WTC11 (cell line): ENCODE measurements at regions of chr9 and their contacts with region 1.

Region 1: GRCh38 chr9:33374634-33375213 is 27.6 kb downstream of the AQP7 start:
- DNase-seq: peak; percentile 81
- ATAC-seq: peak; percentile 87
- H3K4me3 Mint-ChIP-seq: peak overlapping the region; percentile 52
- H3K27ac Mint-ChIP-seq: peak overlapping the region; percentile 65
- H3K4me1 Mint-ChIP-seq: peaks cover 31% of the 10 kb centered on the region
- H3K27me3 Mint-ChIP-seq: no peaks in the 10 kb centered on the region
- CTCF ChIP-seq: peak; percentile 71

Region 2: DNA sequence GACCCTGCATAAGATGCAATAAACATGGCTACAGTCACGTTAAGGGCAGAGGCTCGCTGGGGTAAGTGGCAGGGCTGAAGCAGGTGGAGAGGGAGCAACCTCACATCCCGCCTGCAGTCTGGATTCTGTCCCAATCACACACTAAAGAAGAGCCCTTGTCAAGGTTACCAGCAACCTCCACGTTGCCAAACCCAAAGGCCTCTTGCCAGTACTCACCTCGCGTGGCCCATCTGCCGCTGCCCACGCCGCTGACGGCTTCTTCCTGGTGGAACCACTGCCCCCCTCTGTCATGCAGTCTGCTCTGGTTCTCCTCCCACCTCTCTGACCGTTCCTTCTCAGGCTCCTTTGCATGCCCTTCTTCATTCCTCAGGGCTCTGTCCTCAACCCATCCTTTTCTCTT is 18.9 kb after region 1 on chr9:
- CTCF ChIA-PET with region 1: interaction called, 17 read pairs
- POLR2A ChIA-PET with region 1: no interaction called
- DNase-seq: no peak
- ATAC-seq: no peak
- H3K4me3 Mint-ChIP-seq: no peak overlapping the region
- H3K27ac Mint-ChIP-seq: peak overlapping the region; percentile 13; the same call in 1 of the 2 replicates
- H3K4me1 Mint-ChIP-seq: peaks cover 17% of the 10 kb centered on the region
- H3K27me3 Mint-ChIP-seq: no peaks in the 10 kb centered on the region
- CTCF ChIP-seq: no peak

Region 3: DNA sequence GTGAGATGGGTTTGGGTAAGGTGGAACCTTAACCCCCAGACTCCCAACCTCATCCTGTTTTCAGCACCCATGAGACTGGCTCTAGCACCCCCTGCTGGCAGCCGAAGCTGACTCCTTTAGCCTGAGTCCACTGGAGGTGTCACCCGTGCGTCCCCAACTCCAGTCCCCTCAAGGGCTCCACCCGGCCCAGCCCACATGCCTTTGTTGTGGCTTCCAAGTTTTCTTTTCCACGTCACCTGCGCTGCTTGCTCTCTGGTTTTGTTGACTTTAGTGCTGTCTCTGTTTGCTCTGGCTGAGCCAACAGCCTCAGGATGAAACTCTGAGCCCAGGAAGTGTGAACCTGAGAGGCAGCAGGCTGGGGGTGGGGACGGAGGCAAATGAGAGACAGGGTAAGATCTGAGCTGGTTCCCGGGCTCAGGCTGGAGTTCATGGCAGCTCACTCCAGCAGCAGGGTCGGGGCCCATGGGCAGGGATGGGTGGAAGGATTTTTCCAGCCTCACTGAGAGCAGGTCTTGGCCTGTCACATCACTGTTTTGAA is 40.8 kb after region 1 on chr9:
- CTCF ChIA-PET with region 1: interaction called, 48 read pairs
- POLR2A ChIA-PET with region 1: no interaction called
- DNase-seq: peak; percentile 88
- ATAC-seq: peak; percentile 95
- H3K4me3 Mint-ChIP-seq: no peak overlapping the region
- H3K27ac Mint-ChIP-seq: no peak overlapping the region
- H3K4me1 Mint-ChIP-seq: peaks cover 7% of the 10 kb centered on the region
- H3K27me3 Mint-ChIP-seq: no peaks in the 10 kb centered on the region
- CTCF ChIP-seq: peak; percentile 51

Region 4: DNA sequence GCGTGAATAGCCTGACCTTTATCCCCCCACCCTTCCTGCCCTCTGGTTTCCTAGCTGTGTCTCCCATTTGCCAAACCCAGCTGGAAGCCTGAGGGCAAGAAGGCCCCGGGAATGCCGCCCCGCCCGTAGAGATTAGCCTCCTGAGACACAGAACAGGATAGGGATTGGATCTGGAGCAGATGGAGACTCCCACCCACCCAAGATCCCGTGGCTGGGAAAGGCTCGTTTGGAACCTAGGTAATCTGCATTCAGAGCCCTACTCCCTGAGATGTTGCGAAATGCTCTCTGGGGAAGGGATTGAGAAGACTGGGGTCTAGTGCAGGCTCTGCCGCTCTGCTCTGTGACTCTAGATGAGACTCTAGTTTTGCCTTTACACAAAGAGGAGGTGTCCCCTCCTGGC is 61.7 kb after region 1 on chr9:
- CTCF ChIA-PET with region 1: interaction called, 11 read pairs
- POLR2A ChIA-PET with region 1: interaction called, 3 read pairs
- DNase-seq: no peak
- ATAC-seq: peak; percentile 19
- H3K4me3 Mint-ChIP-seq: no peak overlapping the region
- H3K27ac Mint-ChIP-seq: no peak overlapping the region
- H3K4me1 Mint-ChIP-seq: peaks cover 17% of the 10 kb centered on the region
- H3K27me3 Mint-ChIP-seq: no peaks in the 10 kb centered on the region
- CTCF ChIP-seq: no peak

Region 5: GRCh38 chr9:33466565-33467495 is 92.1 kb after region 1 on chr9:
- CTCF ChIA-PET with region 1: interaction called, 76 read pairs
- POLR2A ChIA-PET with region 1: interaction called, 4 read pairs
- DNase-seq: peak; percentile 88
- ATAC-seq: peak; percentile 93
- H3K4me3 Mint-ChIP-seq: no peak overlapping the region
- H3K27ac Mint-ChIP-seq: no peak overlapping the region
- H3K4me1 Mint-ChIP-seq: no peaks in the 10 kb centered on the region
- H3K27me3 Mint-ChIP-seq: no peaks in the 10 kb centered on the region
- CTCF ChIP-seq: peak; percentile 97

Region 6: GRCh38 chr9:33473643-33474352 is 99.1 kb after region 1 on chr9 and contains the start of gene NOL6:
- CTCF ChIA-PET with region 1: interaction called, 45 read pairs
- POLR2A ChIA-PET with region 1: interaction called, 5 read pairs
- DNase-seq: peak; percentile 98
- ATAC-seq: peak; percentile 100
- H3K4me3 Mint-ChIP-seq: peak within 1 kb of the TSS; percentile 96
- H3K27ac Mint-ChIP-seq: peak within 1 kb of the TSS; percentile 97
- H3K4me1 Mint-ChIP-seq: peaks cover 10% of the 10 kb centered on the region; the same call in 1 of the 2 replicates
- H3K27me3 Mint-ChIP-seq: no peaks in the 10 kb centered on the region
- CTCF ChIP-seq: no peak
- total RNA-seq, gene NOL6: 38.6 to 48.5 TPM (median 42.2 TPM) in 3 replicates